Heart right ventricle (tissue), 16 donors: ENCODE measurements at regions of chr4 and their contacts with region 1.

Region 1: DNA sequence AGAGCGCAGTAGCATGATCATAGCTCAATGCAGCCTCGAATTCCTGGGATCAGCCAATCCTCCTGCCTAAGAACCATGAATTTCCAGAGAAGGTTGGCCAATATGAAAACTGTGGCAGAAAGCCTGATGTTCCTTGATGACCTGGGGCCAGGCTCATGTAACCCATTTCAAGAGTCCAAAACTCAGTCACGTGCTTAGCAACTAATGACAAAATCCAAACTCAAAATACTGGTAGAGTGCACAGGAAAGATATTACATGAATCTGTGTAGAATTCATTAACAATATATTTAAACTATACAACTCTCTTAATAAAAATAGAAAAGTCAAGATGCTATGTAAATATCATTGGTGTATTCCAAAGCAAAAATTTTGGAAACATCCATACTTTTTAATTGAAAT is 265.7 kb upstream of the NDST3 start:
- DNase-seq: no peak
- ATAC-seq: no peak
- H3K4me3 ChIP-seq: no peak overlapping the region
- H3K27ac ChIP-seq: no peak overlapping the region
- H3K4me1 ChIP-seq: no peaks in the 10 kb centered on the region
- H3K27me3 ChIP-seq: no peaks in the 10 kb centered on the region
- CTCF ChIP-seq: no peak

Region 2: GRCh38 chr4:117417856-117418255 is 350.8 kb before region 1 on chr4:
- intact Hi-C with region 1: no loop called
- DNase-seq: no peak
- ATAC-seq: no peak
- H3K4me3 ChIP-seq: no peak overlapping the region
- H3K27ac ChIP-seq: no peak overlapping the region
- H3K4me1 ChIP-seq: no peaks in the 10 kb centered on the region
- H3K27me3 ChIP-seq: no peaks in the 10 kb centered on the region
- CTCF ChIP-seq: no peak

Region 3: GRCh38 chr4:117868201-117868600 is 99.6 kb after region 1 on chr4:
- intact Hi-C with region 1: loop called in 1 of 10 experiments (anchors 5 kb)
- DNase-seq: no peak
- ATAC-seq: no peak
- H3K4me3 ChIP-seq: no peak overlapping the region
- H3K27ac ChIP-seq: no peak overlapping the region
- H3K4me1 ChIP-seq: no peaks in the 10 kb centered on the region
- H3K27me3 ChIP-seq: no peaks in the 10 kb centered on the region
- CTCF ChIP-seq: no peak